MCF 10A (cell line): ENCODE measurements at regions of chr6 and their contacts with region 1.

Region 1: GRCh38 chr6:119541132-119541905 is 191.8 kb upstream of the MAN1A1 start:
- DNase-seq: peak; percentile 96
- H3K4me3 Mint-ChIP-seq: peak overlapping the region; percentile 21
- H3K27ac Mint-ChIP-seq: peak overlapping the region; percentile 86
- H3K4me1 Mint-ChIP-seq: peaks cover 18% of the 10 kb centered on the region
- H3K27me3 Mint-ChIP-seq: no peaks in the 10 kb centered on the region
- CTCF ChIP-seq: no peak

Region 2: GRCh38 chr6:119517428-119517827 is 23.9 kb before region 1 on chr6:
- CTCF ChIA-PET with region 1: no interaction called
- POLR2A ChIA-PET with region 1: no interaction called
- intact Hi-C with region 1: no loop called
- DNase-seq: no peak
- H3K4me3 Mint-ChIP-seq: no peak overlapping the region
- H3K27ac Mint-ChIP-seq: no peak overlapping the region
- H3K4me1 Mint-ChIP-seq: no peaks in the 10 kb centered on the region
- H3K27me3 Mint-ChIP-seq: no peaks in the 10 kb centered on the region
- CTCF ChIP-seq: no peak

Region 3: DNA sequence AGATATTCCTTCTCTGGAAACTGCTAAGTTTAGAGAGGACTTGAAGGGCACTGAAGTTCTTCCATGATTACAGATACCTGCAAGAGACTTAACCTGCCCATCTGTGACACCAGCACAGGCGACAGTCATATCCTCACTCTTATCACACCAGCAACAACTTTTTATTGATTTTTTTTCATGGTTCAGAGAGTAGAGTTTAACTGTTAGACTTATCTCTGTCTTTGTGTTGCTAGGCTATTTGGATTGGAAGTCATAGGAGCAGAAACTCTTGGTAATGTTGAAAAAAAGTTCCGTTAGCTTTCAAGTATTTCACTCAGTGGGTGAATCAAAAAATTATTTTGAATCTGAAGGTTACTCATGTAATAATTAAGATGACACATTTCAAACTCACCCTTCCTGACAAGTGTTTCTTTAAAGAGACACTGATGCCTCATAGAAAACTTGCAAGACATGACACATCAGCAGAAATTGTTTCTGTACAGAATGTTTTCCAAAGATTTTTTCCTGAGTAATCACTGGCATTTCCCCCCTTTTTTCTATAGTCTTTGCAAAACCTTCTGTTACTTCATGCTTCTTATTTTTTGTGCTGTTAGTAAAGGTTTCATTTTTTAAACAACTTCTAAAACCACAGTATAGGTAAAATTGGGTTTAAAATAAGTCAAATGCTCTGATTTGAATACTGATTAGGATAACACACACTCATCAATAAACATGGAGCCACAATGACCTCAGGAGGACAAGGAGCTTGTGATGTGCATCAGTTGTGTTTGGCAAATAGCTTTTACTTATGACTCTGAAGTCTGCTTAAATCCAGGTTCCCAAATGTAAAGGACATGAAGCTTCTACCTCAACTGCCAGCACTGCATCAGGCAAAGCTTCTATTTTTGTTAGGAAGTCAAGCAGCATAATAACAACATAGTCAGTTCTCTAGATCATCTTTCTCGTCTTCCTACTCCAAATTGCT is 61.2 kb after region 1 on chr6:
- CTCF ChIA-PET with region 1: interaction called, 4 read pairs
- POLR2A ChIA-PET with region 1: interaction called, 3 read pairs
- intact Hi-C with region 1: loop called (anchors 1 kb)
- DNase-seq: peak; percentile 52
- H3K4me3 Mint-ChIP-seq: no peak overlapping the region
- H3K27ac Mint-ChIP-seq: no peak overlapping the region
- H3K4me1 Mint-ChIP-seq: peaks cover 13% of the 10 kb centered on the region
- H3K27me3 Mint-ChIP-seq: no peaks in the 10 kb centered on the region
- CTCF ChIP-seq: no peak

Region 4: GRCh38 chr6:119627908-119628669 is 86.8 kb after region 1 on chr6:
- CTCF ChIA-PET with region 1: interaction called, 4 read pairs
- POLR2A ChIA-PET with region 1: interaction called, 4 read pairs
- intact Hi-C with region 1: loop called (anchors 5 kb)
- DNase-seq: peak; percentile 45
- H3K4me3 Mint-ChIP-seq: peak overlapping the region; percentile 11
- H3K27ac Mint-ChIP-seq: no peak overlapping the region
- H3K4me1 Mint-ChIP-seq: peaks cover 13% of the 10 kb centered on the region
- H3K27me3 Mint-ChIP-seq: no peaks in the 10 kb centered on the region
- CTCF ChIP-seq: no peak

Region 5: DNA sequence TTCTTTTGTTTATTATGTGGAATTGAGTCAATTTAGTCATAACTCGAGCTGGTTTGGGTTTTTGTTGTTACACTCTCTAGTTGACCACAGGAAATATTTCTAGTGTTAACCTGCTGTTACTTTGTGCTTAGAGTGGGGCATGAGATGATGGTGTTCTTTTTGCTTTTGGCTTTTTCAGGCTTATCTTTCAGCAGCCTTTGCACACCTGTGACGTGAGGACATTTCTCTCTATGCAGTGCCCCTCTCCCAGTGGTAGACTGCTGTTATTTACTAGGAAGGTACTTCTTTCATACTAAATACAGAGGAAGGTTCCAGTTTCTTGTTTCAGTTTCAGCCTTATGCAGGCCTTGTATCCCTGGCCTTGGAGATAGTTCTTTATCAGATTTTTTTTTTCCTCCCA is 575.0 kb after region 1 on chr6:
- CTCF ChIA-PET with region 1: no interaction called
- POLR2A ChIA-PET with region 1: no interaction called
- intact Hi-C with region 1: no loop called
- DNase-seq: no peak
- H3K4me3 Mint-ChIP-seq: no peak overlapping the region
- H3K27ac Mint-ChIP-seq: no peak overlapping the region
- H3K4me1 Mint-ChIP-seq: no peaks in the 10 kb centered on the region
- H3K27me3 Mint-ChIP-seq: no peaks in the 10 kb centered on the region
- CTCF ChIP-seq: no peak

Region 6: DNA sequence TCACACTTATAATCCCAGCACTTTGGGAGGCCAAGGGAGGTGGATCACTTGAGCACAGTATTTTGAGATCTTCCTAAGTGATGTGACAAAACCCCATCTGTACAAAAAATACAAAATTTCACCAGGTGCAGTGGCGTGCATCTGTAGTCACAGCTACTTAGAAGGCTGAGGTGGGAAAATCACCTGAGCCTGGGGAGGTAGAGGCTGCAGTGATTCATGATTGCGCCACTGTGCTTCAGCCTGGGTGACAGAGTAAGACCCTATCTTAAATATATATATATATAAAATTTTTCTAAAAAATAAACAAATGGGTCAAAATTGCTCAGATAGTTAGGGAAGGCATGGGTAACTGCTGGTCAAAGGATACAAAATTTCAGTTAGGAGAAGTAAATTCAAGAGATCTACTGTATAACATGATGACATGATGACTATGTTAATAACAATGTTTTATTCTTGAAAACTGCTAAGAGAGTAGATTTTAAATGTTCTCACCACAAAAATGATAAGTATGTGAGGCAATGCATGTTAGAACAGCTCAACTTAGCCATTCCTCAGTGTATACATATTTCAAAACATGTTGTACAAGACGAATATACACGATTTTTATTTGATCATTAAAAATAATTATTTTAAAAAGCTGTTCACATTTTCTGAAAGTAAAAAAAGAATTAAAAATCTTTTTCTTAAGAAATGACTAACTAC is 1768.6 kb after region 1 on chr6:
- CTCF ChIA-PET with region 1: no interaction called
- POLR2A ChIA-PET with region 1: no interaction called
- intact Hi-C with region 1: no loop called
- DNase-seq: peak; percentile 49
- H3K4me3 Mint-ChIP-seq: no peak overlapping the region
- H3K27ac Mint-ChIP-seq: peak overlapping the region; percentile 78
- H3K4me1 Mint-ChIP-seq: peaks cover 4% of the 10 kb centered on the region
- H3K27me3 Mint-ChIP-seq: no peaks in the 10 kb centered on the region
- CTCF ChIP-seq: no peak